Caco-2 (cell line): ENCODE measurements at regions of chr13 and their contacts with region 1.

Region 1: GRCh38 chr13:100514788-100515409 is 73.7 kb downstream of the GGACT start:
- DNase-seq: peak; percentile 76 to 82
- H3K4me3 ChIP-seq: no peak overlapping the region
- H3K4me3 Mint-ChIP-seq: no peak overlapping the region
- H3K27ac Mint-ChIP-seq: no peak overlapping the region
- H3K4me1 ChIP-seq: peaks cover 12% of the 10 kb centered on the region; the same call in 1 of the 2 replicates
- H3K4me1 Mint-ChIP-seq: peaks cover 7% of the 10 kb centered on the region
- H3K27me3 ChIP-seq: no peaks in the 10 kb centered on the region
- H3K27me3 Mint-ChIP-seq: no peaks in the 10 kb centered on the region
- CTCF ChIP-seq: peak; percentile 92 to 96

Region 2: DNA sequence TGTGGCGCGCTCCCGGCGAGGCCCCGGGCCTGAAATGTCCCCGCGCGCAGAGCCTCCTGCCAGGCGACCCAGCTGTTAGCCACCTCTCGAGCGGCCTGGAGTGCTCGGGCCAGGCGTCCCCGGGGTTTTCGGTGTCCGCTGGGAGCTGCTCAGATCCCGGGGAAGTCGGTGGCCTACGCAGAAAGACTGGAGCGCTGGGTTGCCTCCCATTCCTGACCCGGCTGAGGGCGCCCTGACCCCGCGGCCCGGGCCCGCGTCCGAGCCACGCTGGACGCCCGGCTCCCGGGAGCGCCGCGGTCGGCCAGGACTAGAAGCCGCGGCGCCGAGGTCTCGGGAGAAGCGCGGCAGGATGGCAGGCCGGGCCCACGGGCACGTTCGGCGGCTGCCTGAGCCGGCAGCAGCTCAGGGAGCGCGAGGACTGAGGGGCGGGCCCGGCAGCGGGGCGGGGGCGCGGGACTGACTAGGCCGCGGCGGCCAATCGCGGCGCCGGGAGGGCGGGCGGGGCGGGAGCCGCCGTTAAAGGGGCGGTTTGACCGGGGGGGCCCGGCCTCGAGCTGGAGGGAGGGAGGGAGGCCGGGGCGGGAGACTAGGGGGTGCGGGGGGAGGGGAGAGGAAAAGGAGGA is 534.6 kb before region 1 on chr13:
- CTCF ChIA-PET with region 1: no interaction called
- POLR2A ChIA-PET with region 1: no interaction called
- intact Hi-C with region 1: loop called (anchors 5 kb)
- DNase-seq: peak; percentile 70 to 80
- H3K4me3 ChIP-seq: peak overlapping the region; percentile 59
- H3K4me3 Mint-ChIP-seq: peak overlapping the region; percentile 61
- H3K27ac Mint-ChIP-seq: no peak overlapping the region
- H3K4me1 ChIP-seq: peaks cover 24% of the 10 kb centered on the region
- H3K4me1 Mint-ChIP-seq: peaks cover 9% of the 10 kb centered on the region
- H3K27me3 ChIP-seq: peaks cover 16% of the 10 kb centered on the region
- H3K27me3 Mint-ChIP-seq: peaks cover 36% of the 10 kb centered on the region
- CTCF ChIP-seq: peak in 1 of 2 experiments; percentile 24

Region 3: GRCh38 chr13:100156788-100157187 is 358.1 kb before region 1 on chr13:
- CTCF ChIA-PET with region 1: no interaction called
- POLR2A ChIA-PET with region 1: no interaction called
- intact Hi-C with region 1: loop called (anchors 10 kb)
- DNase-seq: no peak
- H3K4me3 ChIP-seq: no peak overlapping the region
- H3K4me3 Mint-ChIP-seq: no peak overlapping the region
- H3K27ac Mint-ChIP-seq: no peak overlapping the region
- H3K4me1 ChIP-seq: no peaks in the 10 kb centered on the region; the same call in 1 of the 2 replicates
- H3K4me1 Mint-ChIP-seq: no peaks in the 10 kb centered on the region
- H3K27me3 ChIP-seq: no peaks in the 10 kb centered on the region
- H3K27me3 Mint-ChIP-seq: no peaks in the 10 kb centered on the region
- CTCF ChIP-seq: no peak

Region 4: GRCh38 chr13:100315522-100315921 is 199.4 kb before region 1 on chr13:
- CTCF ChIA-PET with region 1: no interaction called
- POLR2A ChIA-PET with region 1: no interaction called
- intact Hi-C with region 1: loop called (anchors 10 kb)
- DNase-seq: no peak
- H3K4me3 ChIP-seq: no peak overlapping the region
- H3K4me3 Mint-ChIP-seq: no peak overlapping the region
- H3K27ac Mint-ChIP-seq: no peak overlapping the region
- H3K4me1 ChIP-seq: no peaks in the 10 kb centered on the region
- H3K4me1 Mint-ChIP-seq: no peaks in the 10 kb centered on the region
- H3K27me3 ChIP-seq: no peaks in the 10 kb centered on the region
- H3K27me3 Mint-ChIP-seq: no peaks in the 10 kb centered on the region
- CTCF ChIP-seq: no peak